ENCODE measurements at regions of chr14 and their contacts with region 1.

Region 1: DNA sequence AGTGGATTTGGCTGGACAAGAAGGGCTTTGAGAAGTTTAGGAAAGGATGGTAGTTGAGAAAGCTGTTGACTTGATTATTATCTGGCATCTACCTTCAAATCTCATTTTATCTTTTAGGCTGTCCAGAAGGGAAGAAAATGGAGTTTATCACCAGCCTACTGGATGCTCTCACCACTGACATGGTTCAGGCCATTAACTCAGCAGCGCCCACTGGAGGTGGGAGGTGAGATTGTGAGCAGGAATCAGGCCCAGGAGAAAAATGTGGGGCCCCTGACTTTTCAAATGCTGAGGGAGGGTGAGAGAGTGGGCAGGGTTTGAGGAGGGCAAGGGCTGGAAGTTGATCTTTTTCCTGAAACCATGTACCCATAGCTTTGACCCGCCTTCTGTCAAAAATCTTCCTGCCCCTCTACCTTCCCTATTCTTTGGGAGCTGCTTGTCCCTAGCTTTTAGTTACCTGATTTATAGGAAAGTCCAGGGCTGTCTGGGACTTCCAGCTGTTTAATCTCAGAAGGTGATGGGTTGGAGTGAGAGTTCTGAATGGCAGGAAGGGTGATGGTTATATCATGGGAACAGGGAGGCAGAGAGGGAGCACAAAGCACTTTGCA is 134.2 kb downstream of the SMOC1 start:
- DNase-seq: peak; percentile 34 to 94
- H3K4me3 ChIP-seq: no peak overlapping the region
- H3K27ac ChIP-seq: no peak overlapping the region
- H3K4me1 ChIP-seq: peaks cover 0 to 8% (median 5%) of the 10 kb centered on the region in 4 experiments; a peak in 3 of 7 replicates
- H3K27me3 ChIP-seq: no peaks in the 10 kb centered on the region
- CTCF ChIP-seq: peak; percentile 85 to 92 (median 89)
- EP300 ChIP-seq: no peak
- POLR2A ChIP-seq: no peak
- RAD21 ChIP-seq: peak; percentile 77 to 87

Region 2: DNA sequence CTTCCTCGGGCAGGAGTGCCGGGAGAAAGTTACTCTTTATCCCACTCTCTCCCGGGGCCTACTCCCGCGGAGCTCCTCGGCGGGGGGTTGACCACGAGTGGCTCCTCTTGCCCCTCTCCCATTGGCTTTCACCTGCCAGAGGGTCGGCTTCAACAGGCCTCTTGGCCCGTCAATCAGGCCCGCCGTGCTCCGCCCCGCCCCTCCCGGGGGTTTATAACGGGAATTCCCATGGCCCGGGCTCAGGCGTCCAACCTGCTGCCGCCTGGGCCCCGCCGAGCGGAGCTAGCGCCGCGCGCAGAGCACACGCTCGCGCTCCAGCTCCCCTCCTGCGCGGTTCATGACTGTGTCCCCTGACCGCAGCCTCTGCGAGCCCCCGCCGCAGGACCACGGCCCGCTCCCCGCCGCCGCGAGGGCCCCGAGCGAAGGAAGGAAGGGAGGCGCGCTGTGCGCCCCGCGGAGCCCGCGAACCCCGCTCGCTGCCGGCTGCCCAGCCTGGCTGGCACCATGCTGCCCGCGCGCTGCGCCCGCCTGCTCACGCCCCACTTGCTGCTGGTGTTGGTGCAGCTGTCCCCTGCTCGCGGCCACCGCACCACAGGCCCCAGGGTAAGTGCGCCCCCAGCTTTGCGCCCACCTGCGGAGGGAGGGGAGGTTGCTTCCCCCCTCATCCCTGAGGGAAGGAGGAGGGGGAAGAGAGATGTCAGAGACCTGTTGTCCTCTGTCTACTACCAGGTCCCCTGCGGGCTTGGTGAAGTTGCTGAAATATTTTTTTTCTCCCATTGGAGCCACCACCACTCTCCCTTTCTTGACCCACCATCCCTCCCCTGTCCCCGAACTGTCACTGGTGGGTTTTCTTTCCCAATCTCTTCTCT is 134.0 kb before region 1 on chr14 and contains the start of gene SMOC1:
- CTCF ChIA-PET with region 1: interaction called, 37 read pairs
- POLR2A ChIA-PET with region 1: no interaction called
- DNase-seq: peak; percentile 31 to 88
- H3K4me3 ChIP-seq: peak within 1 kb of the TSS; percentile 66 to 81 (median 74)
- H3K27ac ChIP-seq: no peak within 1 kb of the TSS
- H3K4me1 ChIP-seq: peaks cover 0 to 6% (median 4%) of the 10 kb centered on the region in 4 experiments; a peak in 3 of 7 replicates
- H3K27me3 ChIP-seq: peaks cover 3 to 26% (median 21%) of the 10 kb centered on the region in 4 experiments; a peak in 6 of 7 replicates
- CTCF ChIP-seq: no peak
- EP300 ChIP-seq: no peak
- POLR2A ChIP-seq: no peak
- RAD21 ChIP-seq: no peak; a peak in 1 of 4 replicates
- total RNA-seq, gene SMOC1: 1.6 and 2.4 TPM in 2 replicates

Region 3: DNA sequence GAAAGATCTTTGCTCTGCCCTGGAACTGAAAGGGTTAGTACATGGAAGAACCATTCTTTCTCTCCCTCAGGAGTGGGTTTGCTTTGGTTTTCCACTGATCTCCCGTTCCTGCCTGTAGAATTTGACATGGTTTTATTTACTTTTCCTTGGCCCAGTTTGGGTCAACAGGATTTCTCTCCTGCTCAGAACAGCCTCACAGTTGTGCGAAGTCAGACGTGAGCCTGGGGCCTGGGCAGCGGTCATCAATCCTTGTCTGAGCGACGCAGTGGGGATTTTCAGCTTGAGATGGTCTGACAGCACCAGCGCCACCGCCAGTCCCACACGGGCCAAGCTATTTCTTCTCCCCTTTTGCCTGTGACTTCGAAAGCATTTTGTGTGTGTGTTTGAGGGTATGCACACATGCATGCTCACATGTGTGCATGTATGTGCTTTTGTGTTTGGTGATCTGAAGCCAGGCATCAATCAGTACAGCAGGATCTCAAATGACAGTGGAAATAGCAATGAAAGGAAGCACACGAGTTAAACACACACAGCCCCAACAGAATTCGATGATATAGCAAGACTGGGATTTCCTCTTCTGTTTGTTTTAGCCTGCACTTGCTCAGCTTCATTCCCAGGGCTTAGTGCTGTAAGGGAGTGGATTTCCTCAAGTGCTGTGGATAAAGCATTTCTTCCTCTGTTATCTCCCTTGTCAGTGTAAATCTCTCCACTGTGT is 75.8 kb before region 1 on chr14:
- CTCF ChIA-PET with region 1: interaction called, 13 read pairs
- POLR2A ChIA-PET with region 1: no interaction called
- DNase-seq: no peak
- H3K4me3 ChIP-seq: no peak overlapping the region
- H3K27ac ChIP-seq: no peak overlapping the region
- H3K4me1 ChIP-seq: peaks cover 0 to 1% (median 0%) of the 10 kb centered on the region in 4 experiments; a peak in 1 of 7 replicates
- H3K27me3 ChIP-seq: no peaks in the 10 kb centered on the region
- CTCF ChIP-seq: no peak
- EP300 ChIP-seq: no peak
- POLR2A ChIP-seq: no peak
- RAD21 ChIP-seq: no peak

Region 4: GRCh38 chr14:69980457-69981425 is 32.6 kb before region 1 on chr14:
- CTCF ChIA-PET with region 1: interaction called, 12 read pairs
- POLR2A ChIA-PET with region 1: no interaction called
- DNase-seq: no peak
- H3K4me3 ChIP-seq: no peak overlapping the region
- H3K27ac ChIP-seq: no peak overlapping the region
- H3K4me1 ChIP-seq: peaks cover 2 to 8% (median 4%) of the 10 kb centered on the region in 4 experiments; a peak in 6 of 7 replicates
- H3K27me3 ChIP-seq: no peaks in the 10 kb centered on the region
- CTCF ChIP-seq: no peak
- EP300 ChIP-seq: no peak
- POLR2A ChIP-seq: no peak
- RAD21 ChIP-seq: no peak

Region 5: DNA sequence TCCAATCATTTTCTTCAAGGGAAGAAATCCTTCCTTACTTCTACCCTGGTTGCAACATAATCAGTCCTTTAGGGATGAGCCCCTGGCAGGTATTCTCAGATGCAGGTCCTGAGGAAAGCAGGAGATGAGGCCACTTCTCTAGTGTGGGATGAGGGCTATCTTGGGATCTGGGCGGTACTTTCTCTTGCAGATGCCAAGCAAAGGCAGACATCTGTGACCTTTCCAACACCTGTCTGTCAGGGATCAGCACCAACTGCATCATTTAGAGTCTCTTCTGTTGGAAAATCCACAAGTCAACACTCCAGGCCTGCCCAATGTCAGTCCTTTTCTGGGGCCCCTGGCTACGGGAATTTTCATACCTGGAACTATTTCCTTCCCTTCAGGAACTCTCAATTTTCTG is 46.2 kb after region 1 on chr14:
- CTCF ChIA-PET with region 1: no interaction called
- POLR2A ChIA-PET with region 1: no interaction called
- DNase-seq: no peak
- H3K4me3 ChIP-seq: no peak overlapping the region
- H3K27ac ChIP-seq: no peak overlapping the region
- H3K4me1 ChIP-seq: peaks cover 0 to 2% (median 0%) of the 10 kb centered on the region in 4 experiments; a peak in 1 of 7 replicates
- H3K27me3 ChIP-seq: no peaks in the 10 kb centered on the region
- CTCF ChIP-seq: no peak
- EP300 ChIP-seq: no peak
- POLR2A ChIP-seq: no peak
- RAD21 ChIP-seq: no peak

Region 6: GRCh38 chr14:70148911-70149595 is 135.7 kb after region 1 on chr14:
- CTCF ChIA-PET with region 1: no interaction called
- POLR2A ChIA-PET with region 1: no interaction called
- DNase-seq: no peak
- H3K4me3 ChIP-seq: no peak overlapping the region
- H3K27ac ChIP-seq: no peak overlapping the region
- H3K4me1 ChIP-seq: no peaks in the 10 kb centered on the region; a peak in 1 of 7 replicates
- H3K27me3 ChIP-seq: no peaks in the 10 kb centered on the region
- CTCF ChIP-seq: no peak
- EP300 ChIP-seq: no peak
- POLR2A ChIP-seq: no peak
- RAD21 ChIP-seq: no peak

Measured in H1 (cell line).